Activated CD8-positive, alpha-beta T cell treated with anti-CD3 and anti-CD28 coated beads, Interleukin-2, amount 10 ng/mL, durations not matched to agents 7 days and 5 days (primary cell): ENCODE measurements at regions of chr3 and their contacts with region 1.

Region 1: DNA sequence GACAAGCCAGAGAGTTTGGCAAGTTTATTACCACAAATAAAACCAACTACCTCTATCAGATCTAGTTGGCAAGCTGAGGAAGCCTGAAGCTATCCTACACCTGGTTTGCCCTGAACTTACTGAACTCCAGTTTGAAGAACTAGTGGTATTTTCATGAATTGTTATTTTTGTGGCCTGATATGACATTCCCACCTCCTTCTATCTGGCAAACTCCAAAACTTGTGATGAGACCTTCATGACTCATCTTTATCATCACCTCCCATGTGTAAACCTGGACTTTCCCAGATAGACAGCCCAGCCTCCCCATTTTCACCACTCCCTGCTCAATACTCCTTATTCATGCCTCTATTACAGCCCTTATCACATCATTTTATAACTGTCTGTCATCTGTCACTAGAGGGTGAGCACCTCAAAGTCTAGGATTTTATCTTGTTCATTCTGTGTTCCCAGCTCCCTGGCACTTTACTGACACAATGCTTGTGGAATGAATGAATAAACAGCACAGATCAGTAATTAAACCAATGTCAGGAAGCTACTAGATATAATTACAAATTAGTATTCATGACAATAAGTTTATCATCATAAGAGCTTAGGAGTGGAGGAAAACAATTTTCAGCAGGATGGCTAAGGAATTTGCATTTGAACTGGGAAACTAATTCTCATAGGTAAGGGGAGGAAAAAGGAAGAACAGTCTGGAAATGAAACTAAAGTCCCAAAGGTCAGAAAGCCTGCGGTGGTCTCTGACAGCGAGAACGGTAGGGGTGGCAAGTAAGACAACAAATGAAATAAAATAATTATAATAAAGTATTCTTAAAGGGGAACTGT is 13.2 kb upstream of the TRANK1 start:
- DNase-seq: no peak
- ATAC-seq: no peak
- H3K4me3 Mint-ChIP-seq: no peak overlapping the region
- H3K27ac Mint-ChIP-seq: peak overlapping the region; percentile 63
- H3K4me1 Mint-ChIP-seq: peaks cover 14% of the 10 kb centered on the region
- H3K27me3 Mint-ChIP-seq: peaks cover 2% of the 10 kb centered on the region

Region 2: GRCh38 chr3:36734742-36735141 is 223.3 kb before region 1 on chr3:
- CTCF ChIA-PET with region 1: interaction called, 19 read pairs
- POLR2A ChIA-PET with region 1: interaction called, 4 read pairs
- DNase-seq: no peak
- ATAC-seq: no peak
- H3K4me3 Mint-ChIP-seq: no peak overlapping the region
- H3K27ac Mint-ChIP-seq: no peak overlapping the region
- H3K4me1 Mint-ChIP-seq: no peaks in the 10 kb centered on the region
- H3K27me3 Mint-ChIP-seq: peaks cover 10% of the 10 kb centered on the region

Region 3: GRCh38 chr3:36843065-36844051 is 114.7 kb before region 1 on chr3:
- CTCF ChIA-PET with region 1: interaction called, 10 read pairs
- POLR2A ChIA-PET with region 1: no interaction called
- DNase-seq: peak; percentile 71
- ATAC-seq: peak; percentile 73
- H3K4me3 Mint-ChIP-seq: peak overlapping the region; percentile 24
- H3K27ac Mint-ChIP-seq: peak overlapping the region; percentile 78
- H3K4me1 Mint-ChIP-seq: peaks cover 64% of the 10 kb centered on the region
- H3K27me3 Mint-ChIP-seq: no peaks in the 10 kb centered on the region

Region 4: DNA sequence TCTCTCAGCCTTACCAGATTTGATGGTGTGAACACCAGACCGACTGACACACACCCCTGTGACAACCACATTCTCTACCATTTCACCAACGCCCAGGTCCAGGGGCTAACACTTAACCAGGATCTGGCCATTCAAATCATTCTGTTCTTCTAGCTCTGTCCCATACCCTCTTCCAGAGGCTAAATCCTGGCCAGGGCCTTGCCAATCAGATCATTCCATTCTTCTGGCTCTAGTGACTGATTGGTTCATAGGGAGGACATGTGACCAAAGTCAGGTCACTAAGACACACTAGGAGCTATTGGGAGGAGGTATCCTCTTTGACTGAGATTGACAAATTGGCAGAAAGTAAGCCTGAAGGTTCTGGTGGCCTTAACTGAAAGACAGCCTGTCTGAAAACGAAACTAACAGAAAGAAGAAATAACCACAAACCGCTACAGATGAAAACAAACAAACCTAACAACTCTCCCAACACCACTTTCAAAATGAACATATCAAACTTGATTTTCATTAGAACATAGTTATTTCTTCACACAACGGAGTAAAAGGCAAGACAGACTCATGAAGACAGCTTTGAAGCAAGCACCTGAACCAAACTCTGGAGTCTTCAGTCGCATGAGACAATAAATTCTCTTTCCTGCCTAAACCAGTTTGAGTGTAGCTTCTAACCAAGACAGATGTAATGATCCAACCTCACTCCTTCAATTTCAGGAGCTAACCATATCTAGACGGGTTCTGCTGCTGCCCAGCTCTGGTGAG is 81.7 kb before region 1 on chr3:
- CTCF ChIA-PET with region 1: interaction called, 42 read pairs
- POLR2A ChIA-PET with region 1: interaction called, 7 read pairs
- DNase-seq: peak; percentile 56
- ATAC-seq: peak; percentile 96
- H3K4me3 Mint-ChIP-seq: peak overlapping the region; percentile 68
- H3K27ac Mint-ChIP-seq: peak overlapping the region; percentile 96
- H3K4me1 Mint-ChIP-seq: peaks cover 36% of the 10 kb centered on the region
- H3K27me3 Mint-ChIP-seq: no peaks in the 10 kb centered on the region

Region 5: GRCh38 chr3:36911990-36912804 is 45.9 kb before region 1 on chr3:
- CTCF ChIA-PET with region 1: interaction called, 84 read pairs
- POLR2A ChIA-PET with region 1: interaction called, 11 read pairs
- DNase-seq: peak; percentile 65
- ATAC-seq: peak; percentile 86
- H3K4me3 Mint-ChIP-seq: peak overlapping the region; percentile 76
- H3K27ac Mint-ChIP-seq: peak overlapping the region; percentile 93
- H3K4me1 Mint-ChIP-seq: peaks cover 36% of the 10 kb centered on the region
- H3K27me3 Mint-ChIP-seq: no peaks in the 10 kb centered on the region

Region 6: GRCh38 chr3:36969540-36970432 is 11.7 kb after region 1 on chr3:
- CTCF ChIA-PET with region 1: interaction called, 16 read pairs
- POLR2A ChIA-PET with region 1: no interaction called
- DNase-seq: peak; percentile 69
- ATAC-seq: peak; percentile 90
- H3K4me3 Mint-ChIP-seq: no peak overlapping the region
- H3K27ac Mint-ChIP-seq: peak overlapping the region; percentile 64
- H3K4me1 Mint-ChIP-seq: peaks cover 37% of the 10 kb centered on the region
- H3K27me3 Mint-ChIP-seq: no peaks in the 10 kb centered on the region

Region 7: GRCh38 chr3:36993326-36994283 is 35.5 kb after region 1 on chr3 and contains the start of gene MLH1:
- CTCF ChIA-PET with region 1: interaction called, 14 read pairs
- POLR2A ChIA-PET with region 1: interaction called, 8 read pairs
- DNase-seq: peak; percentile 95
- ATAC-seq: peak; percentile 91
- H3K4me3 Mint-ChIP-seq: no peak within 1 kb of the TSS
- H3K27ac Mint-ChIP-seq: no peak within 1 kb of the TSS
- H3K4me1 Mint-ChIP-seq: peaks cover 42% of the 10 kb centered on the region
- H3K27me3 Mint-ChIP-seq: no peaks in the 10 kb centered on the region
- total RNA-seq, gene MLH1: 60.9 to 65.3 TPM

Region 8: GRCh38 chr3:37014620-37015019 is 56.5 kb after region 1 on chr3:
- CTCF ChIA-PET with region 1: no interaction called
- POLR2A ChIA-PET with region 1: no interaction called
- DNase-seq: no peak
- ATAC-seq: no peak
- H3K4me3 Mint-ChIP-seq: no peak overlapping the region
- H3K27ac Mint-ChIP-seq: no peak overlapping the region
- H3K4me1 Mint-ChIP-seq: peaks cover 3% of the 10 kb centered on the region
- H3K27me3 Mint-ChIP-seq: no peaks in the 10 kb centered on the region